CD8-positive, alpha-beta T cell (primary cell): ENCODE measurements at regions of chr12 and their contacts with region 1.

Region 1: GRCh38 chr12:29427964-29428363 is 47.0 kb upstream of the ERGIC2 start:
- DNase-seq: peak in 3 of 9 experiments; percentile 6 to 38 (median 27)
- ATAC-seq: peak; percentile 65
- H3K4me3 ChIP-seq: no peak overlapping the region
- H3K4me3 Mint-ChIP-seq: no peak overlapping the region
- H3K27ac ChIP-seq: no peak overlapping the region
- H3K27ac Mint-ChIP-seq: no peak overlapping the region
- H3K4me1 ChIP-seq: no peaks in the 10 kb centered on the region
- H3K4me1 Mint-ChIP-seq: no peaks in the 10 kb centered on the region
- H3K27me3 ChIP-seq: peaks cover 0 to 2% of the 10 kb centered on the region in 2 experiments
- H3K27me3 Mint-ChIP-seq: peaks cover 26% of the 10 kb centered on the region
- CTCF ChIP-seq: peak; percentile 41

Region 2: GRCh38 chr12:29073628-29074239 is 354.2 kb before region 1 on chr12:
- CTCF ChIA-PET with region 1: no interaction called
- POLR2A ChIA-PET with region 1: no interaction called
- intact Hi-C with region 1: loop called in 1 of 2 experiments (anchors 10 kb)
- DNase-seq: peak in 3 of 9 experiments; percentile 1 to 58 (median 47)
- ATAC-seq: peak; percentile 64
- H3K4me3 ChIP-seq: no peak overlapping the region
- H3K4me3 Mint-ChIP-seq: no peak overlapping the region
- H3K27ac ChIP-seq: no peak overlapping the region
- H3K27ac Mint-ChIP-seq: no peak overlapping the region
- H3K4me1 ChIP-seq: no peaks in the 10 kb centered on the region
- H3K4me1 Mint-ChIP-seq: no peaks in the 10 kb centered on the region
- H3K27me3 ChIP-seq: peaks cover 3% of the 10 kb centered on the region in 2 experiments
- H3K27me3 Mint-ChIP-seq: peaks cover 20% of the 10 kb centered on the region
- CTCF ChIP-seq: peak; percentile 84

Region 3: GRCh38 chr12:29309320-29309902 is 118.6 kb before region 1 on chr12:
- CTCF ChIA-PET with region 1: interaction called, 5 read pairs
- POLR2A ChIA-PET with region 1: no interaction called
- intact Hi-C with region 1: loop called in 1 of 2 experiments (anchors 1 kb)
- DNase-seq: peak in 2 of 9 experiments; percentile 7 to 25
- ATAC-seq: no peak
- H3K4me3 ChIP-seq: no peak overlapping the region
- H3K4me3 Mint-ChIP-seq: no peak overlapping the region
- H3K27ac ChIP-seq: no peak overlapping the region
- H3K27ac Mint-ChIP-seq: no peak overlapping the region
- H3K4me1 ChIP-seq: no peaks in the 10 kb centered on the region
- H3K4me1 Mint-ChIP-seq: no peaks in the 10 kb centered on the region
- H3K27me3 ChIP-seq: no peaks in the 10 kb centered on the region
- H3K27me3 Mint-ChIP-seq: no peaks in the 10 kb centered on the region
- CTCF ChIP-seq: peak; percentile 31

Region 4: DNA sequence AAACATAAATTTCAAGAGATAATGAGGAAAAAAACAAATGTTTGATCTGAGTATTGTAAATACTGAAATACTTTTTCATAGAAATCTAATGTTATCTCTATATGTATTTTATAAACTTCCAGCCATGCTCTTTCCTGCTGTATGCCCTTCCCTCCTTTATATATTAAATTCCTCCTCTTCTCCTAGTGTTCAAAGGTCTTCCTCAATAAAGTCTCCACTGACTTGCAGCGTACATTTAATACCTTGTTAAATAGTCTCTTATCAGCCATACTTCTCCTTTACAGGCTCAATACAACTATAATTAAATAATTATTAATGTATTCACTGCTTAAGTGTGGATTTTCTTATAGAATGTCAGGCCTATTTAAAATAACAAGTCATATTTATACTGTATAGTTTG is 73.0 kb before region 1 on chr12:
- CTCF ChIA-PET with region 1: no interaction called
- POLR2A ChIA-PET with region 1: no interaction called
- intact Hi-C with region 1: loop called in 1 of 2 experiments (anchors 5 kb)
- DNase-seq: no peak
- ATAC-seq: no peak
- H3K4me3 ChIP-seq: no peak overlapping the region
- H3K4me3 Mint-ChIP-seq: no peak overlapping the region
- H3K27ac ChIP-seq: no peak overlapping the region
- H3K27ac Mint-ChIP-seq: no peak overlapping the region
- H3K4me1 ChIP-seq: no peaks in the 10 kb centered on the region
- H3K4me1 Mint-ChIP-seq: no peaks in the 10 kb centered on the region
- H3K27me3 ChIP-seq: no peaks in the 10 kb centered on the region
- H3K27me3 Mint-ChIP-seq: no peaks in the 10 kb centered on the region
- CTCF ChIP-seq: no peak

Region 5: GRCh38 chr12:30746190-30746589 is 1318.2 kb after region 1 on chr12:
- CTCF ChIA-PET with region 1: no interaction called
- POLR2A ChIA-PET with region 1: no interaction called
- intact Hi-C with region 1: no loop called
- DNase-seq: no peak
- ATAC-seq: no peak
- H3K4me3 ChIP-seq: no peak overlapping the region
- H3K4me3 Mint-ChIP-seq: no peak overlapping the region
- H3K27ac ChIP-seq: no peak overlapping the region
- H3K27ac Mint-ChIP-seq: no peak overlapping the region
- H3K4me1 ChIP-seq: peaks cover 6% of the 10 kb centered on the region
- H3K4me1 Mint-ChIP-seq: peaks cover 42% of the 10 kb centered on the region
- H3K27me3 ChIP-seq: no peaks in the 10 kb centered on the region
- H3K27me3 Mint-ChIP-seq: no peaks in the 10 kb centered on the region
- CTCF ChIP-seq: no peak